Colonic mucosa (tissue), 4 donors: ENCODE measurements at regions of chr19 and their contacts with region 1.

Region 1: GRCh38 chr19:57099199-57099661 is 20.6 kb upstream of the USP29 start:
- DNase-seq: peak; percentile 55
- H3K4me3 ChIP-seq: no peak overlapping the region
- H3K27ac ChIP-seq: no peak overlapping the region
- H3K4me1 ChIP-seq: no peaks in the 10 kb centered on the region
- H3K27me3 ChIP-seq: no peaks in the 10 kb centered on the region
- CTCF ChIP-seq: peak; percentile 52

Region 2: GRCh38 chr19:56748378-56748777 is 350.9 kb before region 1 on chr19:
- intact Hi-C with region 1: loop called (anchors 5 kb)
- DNase-seq: no peak
- H3K4me3 ChIP-seq: no peak overlapping the region
- H3K27ac ChIP-seq: no peak overlapping the region
- H3K4me1 ChIP-seq: no peaks in the 10 kb centered on the region
- H3K27me3 ChIP-seq: no peaks in the 10 kb centered on the region
- CTCF ChIP-seq: no peak

Region 3: DNA sequence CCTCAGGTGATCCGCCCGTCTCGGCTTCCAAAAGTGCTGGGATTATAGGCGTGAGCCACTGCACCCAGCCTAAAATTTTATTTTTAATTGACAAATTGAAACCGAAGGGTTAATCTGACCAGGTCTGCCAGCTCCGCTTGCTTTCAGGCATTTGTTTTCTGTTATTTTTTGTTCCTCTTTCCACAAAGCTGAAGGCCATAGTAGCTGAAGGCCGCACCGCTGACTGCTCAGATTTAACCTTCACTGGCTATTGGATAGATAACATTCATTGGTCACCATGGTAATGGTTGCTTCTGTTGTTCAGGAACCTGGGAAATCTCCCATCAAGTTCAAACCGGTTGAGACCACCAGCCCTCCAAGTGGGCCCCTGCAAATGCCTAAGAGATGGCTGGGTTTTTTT is 103.9 kb before region 1 on chr19:
- intact Hi-C with region 1: no loop called
- DNase-seq: no peak
- H3K4me3 ChIP-seq: no peak overlapping the region
- H3K27ac ChIP-seq: no peak overlapping the region
- H3K4me1 ChIP-seq: no peaks in the 10 kb centered on the region
- H3K27me3 ChIP-seq: no peaks in the 10 kb centered on the region
- CTCF ChIP-seq: no peak